A549 (cell line): ENCODE measurements at regions of chr1 and their contacts with region 1.

Region 1: GRCh38 chr1:185681034-185681633 is 53.1 kb upstream of the HMCN1 start:
- DNase-seq: peak; percentile 21 to 56
- ATAC-seq: peak; percentile 77 to 86; a peak in 4 of 6 replicates
- H3K4me3 ChIP-seq: no peak overlapping the region
- H3K27ac ChIP-seq: no peak overlapping the region
- H3K4me1 ChIP-seq: no peaks in the 10 kb centered on the region
- CTCF ChIP-seq: peak; percentile 77
- EP300 ChIP-seq: no peak
- POLR2A ChIP-seq: no peak
- RAD21 ChIP-seq: peak; percentile 86 to 87

Region 2: GRCh38 chr1:185112356-185112755 is 568.8 kb before region 1 on chr1:
- CTCF ChIA-PET with region 1: no interaction called
- POLR2A ChIA-PET with region 1: no interaction called
- DNase-seq: no peak
- ATAC-seq: no peak
- H3K4me3 ChIP-seq: no peak overlapping the region
- H3K27ac ChIP-seq: no peak overlapping the region
- H3K4me1 ChIP-seq: no peaks in the 10 kb centered on the region
- CTCF ChIP-seq: no peak
- EP300 ChIP-seq: no peak
- POLR2A ChIP-seq: no peak
- RAD21 ChIP-seq: no peak

Region 3: DNA sequence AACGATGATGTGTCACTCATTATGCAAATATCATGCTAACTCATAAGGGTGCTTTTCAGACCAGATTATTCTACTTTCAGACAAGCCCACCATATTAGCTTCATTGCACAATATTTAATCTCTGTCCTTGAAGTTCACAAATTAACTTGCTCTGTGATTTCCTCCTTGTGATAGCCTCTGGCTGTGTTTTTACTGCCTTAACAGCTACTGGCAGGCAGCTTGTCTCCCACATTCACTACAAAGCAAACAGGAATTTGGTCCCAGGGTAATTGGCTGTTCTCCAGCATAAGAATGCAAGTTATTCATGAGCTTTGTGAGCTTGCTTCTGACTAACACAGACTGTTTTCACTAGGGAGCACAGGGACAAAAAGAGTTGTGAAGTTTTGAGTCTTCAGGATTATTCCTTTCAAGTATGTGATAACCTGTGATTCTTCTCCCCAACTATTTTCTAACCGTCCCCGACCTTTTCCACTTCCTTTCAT is 34.9 kb before region 1 on chr1:
- CTCF ChIA-PET with region 1: interaction called, 12 read pairs
- POLR2A ChIA-PET with region 1: no interaction called
- DNase-seq: peak; percentile 68 to 96
- ATAC-seq: peak; percentile 96 to 98
- H3K4me3 ChIP-seq: peak overlapping the region; percentile 14; the same call in 1 of the 3 replicates
- H3K27ac ChIP-seq: peak overlapping the region; percentile 70 to 80
- H3K4me1 ChIP-seq: peaks cover 36% of the 10 kb centered on the region
- CTCF ChIP-seq: no peak
- EP300 ChIP-seq: peak; percentile 84 to 88; a peak in 4 of 5 replicates
- POLR2A ChIP-seq: no peak
- RAD21 ChIP-seq: peak in 1 of 2 experiments; percentile 60; a peak in 4 of 5 replicates